ENCODE measurements at regions of chr17 and their contacts with region 1.

Region 1: DNA sequence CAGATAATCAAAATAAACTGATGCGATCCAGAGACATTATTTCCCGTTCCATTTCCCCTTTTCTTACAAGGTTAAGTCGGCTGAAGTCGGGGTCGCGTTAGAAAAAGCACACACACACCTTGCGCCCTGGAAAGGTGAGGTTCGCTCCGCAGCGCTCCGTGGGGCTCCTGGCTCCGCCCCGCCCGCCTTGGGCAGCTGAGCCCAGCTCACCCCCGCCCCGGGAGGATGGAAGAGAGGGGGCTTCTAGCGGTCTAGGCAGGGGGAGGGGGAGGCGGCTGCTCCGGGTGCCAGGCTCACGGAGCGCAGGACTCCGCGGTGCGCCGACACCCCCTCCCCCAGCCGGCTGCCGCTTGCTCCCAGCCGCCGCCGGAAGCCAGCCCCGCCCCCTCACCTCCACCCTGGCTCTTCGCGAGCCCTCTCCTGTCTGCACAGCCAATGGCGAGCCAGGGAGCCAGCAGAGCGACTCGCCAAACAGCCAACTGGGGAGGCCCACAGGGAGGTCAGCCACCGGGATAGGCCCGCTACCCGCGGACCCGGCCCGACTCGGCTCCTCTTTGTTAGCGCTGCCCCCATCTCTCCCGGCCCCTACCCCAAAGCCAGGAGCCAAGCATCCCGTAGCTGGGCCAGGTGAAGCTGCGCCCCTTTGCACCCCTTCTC is 30.4 kb downstream of the FAM222B start:
- DNase-seq: peak; percentile 97
- H3K4me3 ChIP-seq: peak overlapping the region; percentile 75
- H3K27ac ChIP-seq: peak overlapping the region; percentile 70
- H3K4me1 ChIP-seq: peaks cover 33% of the 10 kb centered on the region
- CTCF ChIP-seq: no peak

Region 2: GRCh38 chr17:28796062-28796461 is 16.2 kb before region 1 on chr17:
- CTCF ChIA-PET with region 1: no interaction called
- POLR2A ChIA-PET with region 1: interaction called, 14 read pairs
- intact Hi-C with region 1: no loop called
- DNase-seq: no peak
- H3K4me3 ChIP-seq: no peak overlapping the region
- H3K27ac ChIP-seq: no peak overlapping the region
- H3K4me1 ChIP-seq: no peaks in the 10 kb centered on the region
- CTCF ChIP-seq: no peak